IMR-90 (cell line): ENCODE measurements at regions of chr9 and their contacts with region 1.

Region 1: GRCh38 chr9:75027187-75028107 is 646 bp downstream of the CARNMT1 start:
- DNase-seq: peak; percentile 45
- ATAC-seq: peak; percentile 54
- H3K4me3 ChIP-seq: peak overlapping the region; percentile 58
- H3K27ac ChIP-seq: peak overlapping the region; percentile 72
- H3K4me1 ChIP-seq: no peaks in the 10 kb centered on the region; the same call in 1 of the 2 replicates
- H3K27me3 ChIP-seq: no peaks in the 10 kb centered on the region
- CTCF ChIP-seq: peak; percentile 33
- POLR2A ChIP-seq: no peak
- RAD21 ChIP-seq: no peak

Region 2: GRCh38 chr9:74696520-74696919 is 330.9 kb before region 1 on chr9:
- CTCF ChIA-PET with region 1: no interaction called
- POLR2A ChIA-PET with region 1: no interaction called
- dilution Hi-C with region 1: no loop called
- in situ Hi-C with region 1: no loop called
- intact Hi-C with region 1: no loop called
- DNase-seq: no peak
- ATAC-seq: no peak
- H3K4me3 ChIP-seq: no peak overlapping the region
- H3K27ac ChIP-seq: no peak overlapping the region
- H3K4me1 ChIP-seq: no peaks in the 10 kb centered on the region
- H3K27me3 ChIP-seq: no peaks in the 10 kb centered on the region
- CTCF ChIP-seq: no peak
- POLR2A ChIP-seq: no peak
- RAD21 ChIP-seq: no peak

Region 3: DNA sequence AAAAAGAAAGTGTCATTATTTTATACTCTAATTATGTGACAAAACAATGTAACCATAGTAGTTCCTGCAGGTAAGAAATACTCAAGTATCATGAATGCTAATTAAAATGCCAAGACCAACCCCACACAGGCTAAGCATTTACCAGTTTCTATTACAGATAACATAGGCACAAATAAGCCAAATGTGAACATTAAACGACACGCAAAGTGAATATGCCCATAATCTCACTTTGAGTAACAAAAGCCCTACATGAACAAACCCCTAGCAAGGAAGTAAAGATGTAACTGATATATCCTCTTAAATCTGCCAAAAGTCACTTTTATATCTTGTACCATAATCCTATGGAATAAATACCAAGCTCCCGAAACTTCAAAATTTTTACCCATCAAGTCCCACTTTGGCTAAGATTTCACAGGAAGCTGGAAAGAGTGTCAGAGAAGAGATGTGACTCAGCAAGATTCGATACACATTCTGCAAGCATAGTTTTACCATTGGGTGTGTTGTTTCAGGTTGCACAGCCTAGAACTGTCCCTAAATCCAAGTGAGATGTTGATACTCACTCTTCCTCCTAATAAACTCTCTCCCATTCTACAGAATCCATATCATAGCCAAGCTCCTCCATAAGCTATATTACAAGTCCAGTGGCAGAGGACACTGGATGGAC is 168.6 kb before region 1 on chr9:
- CTCF ChIA-PET with region 1: no interaction called
- POLR2A ChIA-PET with region 1: no interaction called
- dilution Hi-C with region 1: no loop called
- in situ Hi-C with region 1: no loop called
- intact Hi-C with region 1: no loop called
- DNase-seq: peak; percentile 2
- ATAC-seq: no peak
- H3K4me3 ChIP-seq: no peak overlapping the region
- H3K27ac ChIP-seq: no peak overlapping the region
- H3K4me1 ChIP-seq: no peaks in the 10 kb centered on the region
- H3K27me3 ChIP-seq: no peaks in the 10 kb centered on the region
- CTCF ChIP-seq: no peak
- POLR2A ChIP-seq: no peak
- RAD21 ChIP-seq: no peak

Region 4: GRCh38 chr9:74887041-74887980 is 140.1 kb before region 1 on chr9 and contains the start of gene TRPM6:
- CTCF ChIA-PET with region 1: no interaction called
- POLR2A ChIA-PET with region 1: no interaction called
- dilution Hi-C with region 1: no loop called
- in situ Hi-C with region 1: no loop called
- intact Hi-C with region 1: no loop called
- DNase-seq: peak; percentile 56
- ATAC-seq: peak; percentile 91
- H3K4me3 ChIP-seq: peak within 1 kb of the TSS; percentile 54
- H3K27ac ChIP-seq: no peak within 1 kb of the TSS
- H3K4me1 ChIP-seq: no peaks in the 10 kb centered on the region
- H3K27me3 ChIP-seq: no peaks in the 10 kb centered on the region; the same call in none of the 2 replicates
- CTCF ChIP-seq: no peak
- POLR2A ChIP-seq: no peak
- RAD21 ChIP-seq: no peak
- total RNA-seq, gene TRPM6: under 0.01 TPM in 2 replicates

Region 5: GRCh38 chr9:74952281-74953151 is 74.9 kb before region 1 on chr9 and contains the start of gene C9orf40:
- CTCF ChIA-PET with region 1: no interaction called
- POLR2A ChIA-PET with region 1: no interaction called
- dilution Hi-C with region 1: no loop called
- in situ Hi-C with region 1: no loop called
- intact Hi-C with region 1: loop called (anchors 1 kb)
- DNase-seq: peak; percentile 80
- ATAC-seq: peak; percentile 96
- H3K4me3 ChIP-seq: peak within 1 kb of the TSS; percentile 100
- H3K27ac ChIP-seq: peak within 1 kb of the TSS; percentile 82
- H3K4me1 ChIP-seq: no peaks in the 10 kb centered on the region
- H3K27me3 ChIP-seq: no peaks in the 10 kb centered on the region
- CTCF ChIP-seq: peak; percentile 81
- POLR2A ChIP-seq: no peak
- RAD21 ChIP-seq: peak; percentile 41
- total RNA-seq, gene C9orf40: 0.36 and 1.7 TPM in 2 replicates